ENCODE measurements at regions of chr1 and their contacts with region 1.

Region 1: DNA sequence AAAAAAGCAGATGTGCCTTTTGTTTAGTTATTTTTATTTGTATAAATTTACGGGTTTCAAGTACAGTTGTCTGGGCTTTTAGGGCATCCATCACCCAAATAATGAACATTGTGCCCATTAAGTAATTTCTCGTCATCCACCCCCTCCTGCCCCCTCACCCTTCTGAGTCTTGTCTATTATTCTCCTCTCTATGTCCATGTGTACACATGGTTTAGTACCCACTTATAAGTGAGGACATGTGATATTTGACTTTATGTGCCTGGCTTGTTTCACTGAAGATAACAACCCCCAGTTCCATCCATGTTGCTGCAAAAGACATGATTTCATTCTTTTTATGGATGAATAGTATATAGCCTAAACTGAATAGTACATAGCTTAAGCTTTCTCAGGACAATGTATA is 189.2 kb downstream of the ZP4 start:
- DNase-seq: no peak
- ATAC-seq: no peak

Region 2: DNA sequence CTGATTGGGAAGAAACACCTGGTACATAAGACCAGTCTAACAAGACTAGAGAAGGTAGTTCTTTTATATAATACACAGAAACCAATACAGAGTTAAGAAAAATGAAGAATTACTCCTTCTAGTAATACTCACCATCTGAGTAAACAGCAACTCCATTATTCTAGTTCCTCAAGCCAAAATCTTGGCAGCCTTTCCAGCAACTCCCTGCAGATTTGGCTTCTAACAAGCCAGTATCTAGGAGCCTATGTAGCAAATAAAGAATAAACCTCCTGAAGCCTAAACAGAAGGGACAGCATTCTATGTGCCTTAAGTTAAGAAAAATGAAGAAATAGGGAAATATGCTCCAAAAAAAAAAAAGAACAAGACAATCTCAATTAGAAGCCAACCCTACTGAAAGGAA is 1444.3 kb before region 1 on chr1:
- intact Hi-C with region 1: loop called (anchors 5 kb)
- DNase-seq: no peak
- ATAC-seq: no peak

Region 3: GRCh38 chr1:237590386-237590785 is 111.1 kb before region 1 on chr1:
- intact Hi-C with region 1: no loop called
- DNase-seq: no peak
- ATAC-seq: no peak

Region 4: GRCh38 chr1:237650809-237651208 is 50.7 kb before region 1 on chr1:
- intact Hi-C with region 1: no loop called
- DNase-seq: no peak
- ATAC-seq: no peak

Region 5: GRCh38 chr1:237736372-237737029 is 35.0 kb after region 1 on chr1:
- intact Hi-C with region 1: no loop called
- DNase-seq: no peak
- ATAC-seq: no peak